B cell (primary cell): ENCODE measurements at regions of chr16 and their contacts with region 1.

Region 1: DNA sequence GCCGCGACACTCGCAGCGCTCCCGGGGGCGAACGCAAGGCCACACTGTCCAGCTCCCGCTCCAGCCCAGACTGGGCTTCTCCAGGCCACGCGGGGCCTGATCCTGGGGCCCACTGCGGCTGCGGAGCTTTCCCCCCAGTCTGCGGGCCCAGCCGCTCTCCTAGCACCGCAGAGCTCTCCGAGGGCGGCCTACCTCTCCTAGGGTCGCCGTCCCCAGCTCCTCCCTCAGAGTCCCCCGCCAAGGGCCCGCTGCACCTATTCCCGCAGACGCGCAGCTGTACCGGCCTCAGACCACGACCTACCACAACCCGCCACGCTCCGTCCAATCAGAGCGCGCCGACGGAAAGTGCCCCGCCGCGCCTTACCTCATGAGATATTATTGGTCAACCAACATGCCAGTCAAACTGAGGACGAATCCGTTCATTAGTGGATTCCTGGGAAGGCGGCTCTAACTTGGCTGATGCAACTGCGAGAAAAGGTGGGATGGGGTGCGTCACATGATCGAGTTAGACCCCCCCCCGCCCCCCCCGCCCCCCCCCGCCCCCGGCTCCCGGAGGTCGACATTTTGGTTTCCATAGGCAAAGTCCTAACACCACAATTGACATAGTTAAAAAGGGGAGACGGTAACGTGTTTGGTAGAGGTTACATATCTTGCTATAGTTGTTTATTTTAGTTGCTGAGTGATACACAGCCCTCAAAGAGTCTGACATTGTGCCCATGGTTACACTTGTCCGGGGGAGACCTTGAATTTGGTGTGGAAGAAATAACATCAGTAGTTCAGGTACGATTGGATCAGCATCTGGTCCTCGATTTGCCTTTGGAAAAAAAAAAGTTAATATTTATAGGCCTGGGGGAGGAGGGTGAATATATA is at the start of gene AARS1:
- DNase-seq: peak; percentile 98
- ATAC-seq: peak; percentile 97
- H3K4me3 ChIP-seq: peak within 1 kb of the TSS; percentile 80 to 91 (median 86)
- H3K4me3 Mint-ChIP-seq: peak within 1 kb of the TSS; percentile 99
- H3K27ac ChIP-seq: peak within 1 kb of the TSS; percentile 79 to 90
- H3K27ac Mint-ChIP-seq: peak within 1 kb of the TSS; percentile 96
- H3K4me1 ChIP-seq: peaks cover 0 to 16% of the 10 kb centered on the region in 2 donors
- H3K4me1 Mint-ChIP-seq: peaks cover 15% of the 10 kb centered on the region
- H3K27me3 ChIP-seq: no peaks in the 10 kb centered on the region
- H3K27me3 Mint-ChIP-seq: no peaks in the 10 kb centered on the region
- CTCF ChIP-seq: no peak
- total RNA-seq, gene AARS1: 54.4 and 57.8 TPM in 2 replicates

Region 2: GRCh38 chr16:70251629-70252354 is 37.7 kb before region 1 on chr16 and contains the start of gene EXOSC6:
- CTCF ChIA-PET with region 1: interaction called, 4 read pairs
- POLR2A ChIA-PET with region 1: no interaction called
- intact Hi-C with region 1: loop called (anchors 2 kb)
- DNase-seq: peak; percentile 96
- ATAC-seq: peak; percentile 97
- H3K4me3 ChIP-seq: peak within 1 kb of the TSS; percentile 19 to 76 (median 65)
- H3K4me3 Mint-ChIP-seq: peak within 1 kb of the TSS; percentile 90
- H3K27ac ChIP-seq: peak within 1 kb of the TSS; percentile 38 to 78
- H3K27ac Mint-ChIP-seq: peak within 1 kb of the TSS; percentile 98
- H3K4me1 ChIP-seq: peaks cover 0 to 24% of the 10 kb centered on the region in 2 donors
- H3K4me1 Mint-ChIP-seq: peaks cover 14% of the 10 kb centered on the region
- H3K27me3 ChIP-seq: no peaks in the 10 kb centered on the region
- H3K27me3 Mint-ChIP-seq: no peaks in the 10 kb centered on the region
- CTCF ChIP-seq: peak; percentile 92
- total RNA-seq, gene EXOSC6: 41.8 and 42.3 TPM in 2 replicates